Motor neuron (in vitro differentiated cells): ENCODE measurements at regions of chr14 and their contacts with region 1.

Region 1: DNA sequence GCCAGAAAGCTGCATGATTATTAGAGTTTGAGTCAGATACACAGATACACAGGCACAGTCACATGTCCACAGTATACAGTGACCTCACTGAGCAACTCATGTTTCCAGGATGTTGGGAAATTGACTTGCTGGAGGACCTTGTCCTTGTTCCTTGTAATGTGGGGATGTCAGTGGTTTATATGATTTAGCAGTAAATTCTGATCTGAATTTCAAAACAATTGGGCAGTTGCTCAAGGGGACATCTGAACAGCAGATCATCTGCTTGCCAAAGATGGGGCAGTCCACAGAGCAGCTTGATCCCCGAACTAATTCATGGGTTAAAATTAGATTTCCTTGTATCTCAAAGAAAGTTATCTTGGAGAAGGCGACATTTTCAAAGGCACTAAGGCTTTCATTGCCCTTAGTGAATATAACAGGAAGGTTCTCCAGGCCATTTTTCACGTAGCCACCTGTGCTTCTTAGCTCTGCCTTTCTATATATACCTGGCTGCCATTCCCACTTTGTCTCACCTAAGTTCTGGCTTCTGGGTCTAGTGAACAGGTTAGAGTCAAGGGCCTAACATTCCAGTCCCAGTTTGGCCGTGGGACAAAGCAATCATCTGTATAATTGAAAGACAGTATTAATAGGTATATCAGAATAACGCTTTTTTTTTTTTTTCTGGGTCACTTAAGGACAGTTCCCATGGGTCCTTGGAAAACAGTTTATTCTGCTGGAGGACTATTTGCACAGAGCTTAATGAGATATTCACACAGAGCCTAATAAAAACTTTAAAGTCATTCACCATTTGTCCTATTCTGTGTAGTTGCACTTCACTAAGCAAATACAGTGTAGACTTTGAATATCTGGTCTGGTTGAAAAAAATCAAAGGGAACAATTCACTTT is 64.9 kb upstream of the STRN3 start:
- ATAC-seq: peak; percentile 40 to 95 (median 70)
- H3K4me3 ChIP-seq: no peak overlapping the region
- H3K27ac ChIP-seq: no peak overlapping the region
- H3K4me1 ChIP-seq: no peaks in the 10 kb centered on the region

Region 2: DNA sequence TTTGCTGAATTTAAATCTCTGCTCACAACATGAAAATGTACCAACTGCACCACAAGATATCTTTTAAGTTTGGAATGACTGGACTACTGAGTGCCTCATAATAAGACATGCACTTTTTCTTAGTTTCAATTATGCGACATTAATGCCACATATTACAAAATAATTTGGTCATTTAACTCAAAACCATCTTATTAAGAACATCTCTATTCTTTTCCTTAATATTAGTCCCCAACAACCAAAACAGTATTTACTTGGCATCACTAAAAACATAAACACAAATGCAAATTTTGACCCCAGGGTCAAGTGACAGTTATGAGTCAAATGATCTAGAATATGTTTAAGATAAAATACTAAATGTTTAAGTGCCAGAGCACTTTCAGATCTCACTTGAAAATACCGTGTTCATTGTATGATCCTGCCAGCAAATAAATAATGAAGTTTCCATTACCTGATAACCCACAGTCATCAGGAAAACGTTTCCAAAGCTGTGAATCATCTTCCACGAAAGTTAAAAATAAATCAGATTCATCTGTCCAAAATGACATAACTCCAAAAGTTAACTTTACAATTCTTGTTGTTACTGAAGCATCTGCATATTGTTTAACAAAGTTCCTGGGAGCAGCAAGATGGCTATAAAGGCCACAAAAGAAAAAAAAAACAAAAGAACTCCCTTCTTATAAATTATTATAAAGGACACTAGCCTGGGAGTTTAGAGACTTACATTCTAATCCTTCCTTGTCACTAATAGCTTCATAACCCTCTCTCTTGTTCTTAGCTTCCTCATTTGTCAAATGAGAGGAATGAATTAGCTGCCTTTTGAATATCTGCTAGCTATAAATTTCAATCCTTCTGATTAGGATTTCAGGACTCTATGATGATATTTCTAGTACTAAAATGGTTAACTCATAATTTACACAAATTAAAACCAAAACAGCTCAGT is 96.2 kb before region 1 on chr14:
- in situ Hi-C with region 1: loop called in 2 of 9 experiments (anchors 25 kb)
- ATAC-seq: peak in 2 of 8 experiments; percentile 46 to 79
- H3K4me3 ChIP-seq: no peak overlapping the region
- H3K27ac ChIP-seq: no peak overlapping the region
- H3K4me1 ChIP-seq: no peaks in the 10 kb centered on the region

Region 3: GRCh38 chr14:31270196-31270772 is 179.2 kb after region 1 on chr14:
- in situ Hi-C with region 1: no loop called
- ATAC-seq: peak in 2 of 8 experiments; percentile 5 to 12
- H3K4me3 ChIP-seq: no peak overlapping the region
- H3K27ac ChIP-seq: no peak overlapping the region
- H3K4me1 ChIP-seq: no peaks in the 10 kb centered on the region